ENCODE measurements at regions of chr19 and their contacts with region 1.

Region 1: DNA sequence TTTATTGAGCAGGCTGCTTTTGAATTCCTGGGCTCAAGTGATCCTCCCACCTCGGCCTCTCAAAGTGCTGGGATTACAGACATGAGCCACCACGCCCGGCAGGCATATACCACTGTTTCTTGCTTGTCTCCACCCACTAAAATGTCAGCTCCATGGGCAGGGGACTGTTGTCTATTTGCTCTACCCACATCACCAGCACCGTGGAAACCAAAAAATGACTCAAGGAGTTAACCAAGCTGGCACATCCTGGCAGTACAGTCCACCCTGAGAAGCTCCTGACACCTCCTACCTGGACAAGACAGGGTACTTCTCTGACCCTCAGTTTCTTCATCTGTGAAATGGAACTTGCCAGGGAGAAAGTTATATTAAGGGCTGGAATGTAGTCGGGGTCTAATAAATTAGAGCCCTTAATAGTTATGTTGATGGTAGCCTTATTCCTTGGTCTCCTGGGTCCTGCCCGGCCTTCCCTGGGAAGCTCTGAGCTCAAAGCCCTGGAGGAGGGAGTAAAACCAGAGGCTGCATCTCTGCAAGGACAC is 13.9 kb downstream of the RDH8 start:
- DNase-seq: no peak
- H3K4me3 Mint-ChIP-seq: no peak overlapping the region
- H3K27ac Mint-ChIP-seq: no peak overlapping the region
- H3K4me1 Mint-ChIP-seq: peaks cover 7% of the 10 kb centered on the region
- H3K27me3 Mint-ChIP-seq: peaks cover 13% of the 10 kb centered on the region

Region 2: GRCh38 chr19:10000171-10000826 is 26.9 kb before region 1 on chr19:
- CTCF ChIA-PET with region 1: interaction called, 14 read pairs
- POLR2A ChIA-PET with region 1: no interaction called
- DNase-seq: peak; percentile 71
- H3K4me3 Mint-ChIP-seq: no peak overlapping the region
- H3K27ac Mint-ChIP-seq: no peak overlapping the region
- H3K4me1 Mint-ChIP-seq: peaks cover 11% of the 10 kb centered on the region
- H3K27me3 Mint-ChIP-seq: peaks cover 10% of the 10 kb centered on the region

Region 3: DNA sequence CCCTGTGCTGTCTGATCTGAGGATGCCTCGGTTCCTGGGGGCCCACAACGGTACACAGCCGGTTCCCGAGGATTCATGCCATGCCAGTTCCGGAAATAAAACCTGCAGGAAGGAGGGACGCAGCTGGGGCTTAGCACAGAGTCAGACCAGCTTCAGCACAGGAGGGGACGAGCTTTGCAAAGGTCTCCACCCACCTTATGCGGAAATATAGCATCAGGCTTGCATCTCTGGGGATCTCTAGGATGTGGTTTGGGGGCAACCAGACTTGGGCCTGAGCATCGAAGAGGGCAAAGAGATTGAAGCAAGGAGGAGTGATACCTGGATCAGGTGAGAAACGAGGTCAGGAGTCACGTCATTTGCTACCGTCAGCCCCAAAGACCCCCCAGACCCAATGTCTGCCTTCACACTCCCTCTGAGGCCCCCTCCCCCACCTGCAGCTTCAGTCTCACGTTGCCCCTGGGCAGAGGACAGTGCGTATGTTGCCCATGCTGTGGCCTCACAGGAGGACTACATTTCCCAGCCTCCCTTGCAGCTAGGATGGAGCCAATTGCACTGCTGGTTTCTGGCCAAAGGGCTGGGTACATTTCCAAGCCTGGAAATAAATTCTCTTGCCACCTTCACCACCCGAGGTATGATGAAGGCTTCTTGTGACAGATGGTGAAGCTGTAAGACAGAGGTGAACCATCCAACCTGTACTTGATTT is 341.0 kb after region 1 on chr19:
- CTCF ChIA-PET with region 1: no interaction called
- POLR2A ChIA-PET with region 1: no interaction called
- DNase-seq: no peak
- H3K4me3 Mint-ChIP-seq: no peak overlapping the region
- H3K27ac Mint-ChIP-seq: no peak overlapping the region
- H3K4me1 Mint-ChIP-seq: no peaks in the 10 kb centered on the region
- H3K27me3 Mint-ChIP-seq: no peaks in the 10 kb centered on the region

Measured in activated CD4-positive, alpha-beta T cell treated with anti-CD3 and anti-CD28 coated beads, Interleukin-2, amount 10 ng/mL, durations not matched to agents 7 days and 5 days (primary cell).